IMR-90 (cell line): ENCODE measurements at regions of chrX and their contacts with region 1.

Region 1: DNA sequence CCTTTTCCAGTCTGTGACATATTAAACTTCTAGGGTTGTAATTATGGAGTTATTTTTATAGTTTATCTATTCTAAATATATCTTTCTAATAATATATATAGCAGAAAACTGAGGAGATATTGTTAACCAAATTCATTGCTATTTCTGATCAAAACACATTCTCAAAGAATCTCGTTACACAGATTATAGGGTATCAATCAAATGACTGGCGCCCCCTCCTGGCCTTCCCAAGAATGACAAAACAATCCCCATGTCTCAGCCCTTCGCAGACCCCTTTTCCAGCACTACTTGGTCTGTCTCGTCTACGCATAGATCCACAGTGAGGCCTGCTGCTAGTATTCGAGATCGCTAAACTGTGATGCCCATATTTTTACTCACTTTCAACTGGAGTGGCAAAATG is 209.3 kb downstream of the GPC3 start:
- DNase-seq: no peak
- ATAC-seq: no peak
- H3K4me3 ChIP-seq: no peak overlapping the region
- H3K27ac ChIP-seq: no peak overlapping the region
- H3K4me1 ChIP-seq: no peaks in the 10 kb centered on the region
- H3K27me3 ChIP-seq: peaks cover 8% of the 10 kb centered on the region
- CTCF ChIP-seq: peak; percentile 39
- POLR2A ChIP-seq: no peak
- RAD21 ChIP-seq: no peak

Region 2: GRCh38 chrX:132968296-132968949 is 807.6 kb before region 1 on chrX:
- CTCF ChIA-PET with region 1: no interaction called
- POLR2A ChIA-PET with region 1: no interaction called
- dilution Hi-C with region 1: no loop called
- in situ Hi-C with region 1: no loop called
- intact Hi-C with region 1: loop called (anchors 10 kb)
- DNase-seq: no peak
- ATAC-seq: no peak
- H3K4me3 ChIP-seq: no peak overlapping the region
- H3K27ac ChIP-seq: no peak overlapping the region
- H3K4me1 ChIP-seq: no peaks in the 10 kb centered on the region
- H3K27me3 ChIP-seq: 0 out of 2 replicates have a peak, but pooled peaks cover 2% of the 10 kb centered on the region
- CTCF ChIP-seq: no peak
- POLR2A ChIP-seq: no peak
- RAD21 ChIP-seq: no peak

Region 3: GRCh38 chrX:133958997-133959688 is 183.1 kb after region 1 on chrX:
- CTCF ChIA-PET with region 1: no interaction called
- POLR2A ChIA-PET with region 1: no interaction called
- dilution Hi-C with region 1: no loop called
- in situ Hi-C with region 1: no loop called
- intact Hi-C with region 1: no loop called
- DNase-seq: no peak
- ATAC-seq: no peak
- H3K4me3 ChIP-seq: no peak overlapping the region
- H3K27ac ChIP-seq: no peak overlapping the region
- H3K4me1 ChIP-seq: no peaks in the 10 kb centered on the region
- H3K27me3 ChIP-seq: peaks cover 2% of the 10 kb centered on the region; the same call in 1 of the 2 replicates
- CTCF ChIP-seq: no peak
- POLR2A ChIP-seq: no peak
- RAD21 ChIP-seq: no peak

Region 4: DNA sequence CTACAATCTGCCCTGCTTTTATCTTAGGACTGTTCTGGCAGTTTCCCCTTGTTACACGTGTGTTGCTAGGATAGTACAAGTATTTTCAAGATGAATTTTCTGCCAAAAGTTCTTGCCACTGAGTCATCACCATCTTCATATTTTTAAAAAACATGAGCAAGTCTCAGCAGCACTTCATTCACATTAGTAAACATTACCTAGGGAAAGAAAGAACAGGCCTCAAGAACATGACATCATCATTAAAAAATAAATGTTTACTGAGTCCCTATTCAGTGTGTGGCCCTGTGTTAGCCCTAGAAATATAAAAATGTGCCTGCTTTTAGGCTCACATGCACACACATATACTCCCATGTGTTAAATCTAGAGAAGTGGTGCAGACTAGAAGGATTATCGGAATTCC is 228.0 kb after region 1 on chrX:
- CTCF ChIA-PET with region 1: no interaction called
- POLR2A ChIA-PET with region 1: no interaction called
- dilution Hi-C with region 1: no loop called
- in situ Hi-C with region 1: no loop called
- intact Hi-C with region 1: no loop called
- DNase-seq: peak; percentile 1
- ATAC-seq: no peak
- H3K4me3 ChIP-seq: no peak overlapping the region
- H3K27ac ChIP-seq: no peak overlapping the region
- H3K4me1 ChIP-seq: no peaks in the 10 kb centered on the region
- H3K27me3 ChIP-seq: peaks cover 2% of the 10 kb centered on the region; the same call in 1 of the 2 replicates
- CTCF ChIP-seq: no peak
- POLR2A ChIP-seq: no peak
- RAD21 ChIP-seq: no peak